PC-3 (cell line): ENCODE measurements at regions of chr17 and their contacts with region 1.

Region 1: DNA sequence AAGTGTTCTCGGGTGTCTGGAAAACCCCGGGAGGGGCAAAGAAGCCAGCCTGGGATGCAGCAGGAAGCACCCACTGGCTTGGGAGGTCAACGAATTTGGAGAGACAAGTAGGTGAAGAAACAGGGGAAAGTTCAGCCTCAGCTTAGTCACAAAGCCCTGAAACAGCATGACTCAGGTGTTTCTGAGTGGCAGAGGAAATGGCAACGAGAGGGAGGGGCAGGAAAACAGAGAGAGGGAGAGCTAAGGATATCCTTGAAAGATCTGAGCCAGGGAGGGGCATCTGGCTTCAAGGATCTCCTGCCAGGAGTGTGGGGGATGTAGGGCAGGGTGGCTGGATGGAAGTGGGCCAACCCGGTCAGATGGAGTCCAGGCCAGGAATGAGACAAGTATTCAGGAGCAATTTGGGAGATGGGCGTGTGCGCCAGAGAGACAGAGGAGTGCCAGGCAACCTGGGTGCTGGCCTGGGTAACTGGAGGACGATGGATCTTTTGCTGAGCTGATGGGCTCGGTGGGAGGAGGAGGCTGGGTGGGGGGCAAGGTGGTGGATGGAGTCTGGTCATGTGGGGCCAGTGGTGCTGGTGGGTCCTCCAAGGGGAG is 27.2 kb downstream of the ABCC3 start:
- DNase-seq: peak; percentile 100
- ATAC-seq: peak; percentile 76
- H3K4me3 ChIP-seq: peak overlapping the region; percentile 26; the same call in 1 of the 2 replicates
- H3K27ac ChIP-seq: peak overlapping the region; percentile 89
- H3K4me1 ChIP-seq: peaks cover 37% of the 10 kb centered on the region
- H3K27me3 ChIP-seq: no peaks in the 10 kb centered on the region
- CTCF ChIP-seq: no peak

Region 2: DNA sequence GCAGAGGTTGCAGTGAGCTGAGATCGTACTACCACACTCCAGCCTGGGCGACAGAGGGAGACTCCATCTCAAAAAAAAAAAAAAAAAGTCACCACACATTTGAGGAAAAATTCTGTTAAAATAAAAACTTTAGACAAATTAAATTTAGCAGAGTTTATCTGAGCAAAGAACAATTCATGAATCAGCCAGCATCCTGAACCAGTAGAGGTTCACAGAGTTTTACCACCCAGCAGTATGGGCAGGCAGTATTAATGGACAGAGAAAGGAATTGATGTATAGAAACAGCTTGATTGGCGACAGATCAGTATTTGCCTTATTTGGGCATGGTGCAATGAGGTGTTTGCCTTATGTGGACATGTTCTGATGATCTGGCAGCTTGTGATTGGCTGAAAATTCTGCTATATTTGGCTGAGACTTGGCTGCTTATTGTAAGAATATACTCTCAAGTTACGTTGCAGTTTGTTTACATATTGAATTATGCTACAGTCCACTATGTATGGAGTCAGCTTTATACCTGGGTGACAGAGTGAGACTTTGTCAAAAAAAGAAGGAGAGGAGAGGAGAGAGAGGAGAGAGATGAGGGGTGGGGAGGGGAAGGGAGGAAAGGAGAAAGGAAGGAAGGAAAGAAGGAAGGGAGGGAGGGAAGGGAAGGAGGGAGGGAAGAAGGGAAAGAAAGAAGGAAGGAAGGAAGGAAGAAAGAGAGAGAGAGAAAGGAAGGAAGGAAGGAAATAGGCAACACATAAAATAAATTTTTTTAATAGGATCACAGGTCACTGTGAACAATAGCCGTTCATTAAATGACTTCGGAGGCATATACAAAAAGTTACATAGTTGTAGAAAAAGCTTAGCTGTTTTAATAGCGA is 12.6 kb before region 1 on chr17:
- CTCF ChIA-PET with region 1: no interaction called
- POLR2A ChIA-PET with region 1: interaction called, 12 read pairs
- intact Hi-C with region 1: no loop called
- DNase-seq: peak; percentile 91
- ATAC-seq: peak; percentile 79
- H3K4me3 ChIP-seq: no peak overlapping the region
- H3K27ac ChIP-seq: peak overlapping the region; percentile 39
- H3K4me1 ChIP-seq: peaks cover 9% of the 10 kb centered on the region
- H3K27me3 ChIP-seq: no peaks in the 10 kb centered on the region
- CTCF ChIP-seq: no peak

Region 3: GRCh38 chr17:50719144-50719923 is 57.4 kb after region 1 on chr17 and contains the start of gene LUC7L3:
- CTCF ChIA-PET with region 1: no interaction called
- POLR2A ChIA-PET with region 1: no interaction called
- intact Hi-C with region 1: no loop called
- DNase-seq: peak; percentile 98
- ATAC-seq: peak; percentile 92
- H3K4me3 ChIP-seq: peak within 1 kb of the TSS; percentile 91
- H3K27ac ChIP-seq: peak within 1 kb of the TSS; percentile 84
- H3K4me1 ChIP-seq: peaks cover 25% of the 10 kb centered on the region
- H3K27me3 ChIP-seq: no peaks in the 10 kb centered on the region
- CTCF ChIP-seq: no peak
- total RNA-seq, gene LUC7L3: 43.0 and 54.3 TPM in 2 replicates